ENCODE measurements at regions of chr2 and their contacts with region 1.

Region 1: DNA sequence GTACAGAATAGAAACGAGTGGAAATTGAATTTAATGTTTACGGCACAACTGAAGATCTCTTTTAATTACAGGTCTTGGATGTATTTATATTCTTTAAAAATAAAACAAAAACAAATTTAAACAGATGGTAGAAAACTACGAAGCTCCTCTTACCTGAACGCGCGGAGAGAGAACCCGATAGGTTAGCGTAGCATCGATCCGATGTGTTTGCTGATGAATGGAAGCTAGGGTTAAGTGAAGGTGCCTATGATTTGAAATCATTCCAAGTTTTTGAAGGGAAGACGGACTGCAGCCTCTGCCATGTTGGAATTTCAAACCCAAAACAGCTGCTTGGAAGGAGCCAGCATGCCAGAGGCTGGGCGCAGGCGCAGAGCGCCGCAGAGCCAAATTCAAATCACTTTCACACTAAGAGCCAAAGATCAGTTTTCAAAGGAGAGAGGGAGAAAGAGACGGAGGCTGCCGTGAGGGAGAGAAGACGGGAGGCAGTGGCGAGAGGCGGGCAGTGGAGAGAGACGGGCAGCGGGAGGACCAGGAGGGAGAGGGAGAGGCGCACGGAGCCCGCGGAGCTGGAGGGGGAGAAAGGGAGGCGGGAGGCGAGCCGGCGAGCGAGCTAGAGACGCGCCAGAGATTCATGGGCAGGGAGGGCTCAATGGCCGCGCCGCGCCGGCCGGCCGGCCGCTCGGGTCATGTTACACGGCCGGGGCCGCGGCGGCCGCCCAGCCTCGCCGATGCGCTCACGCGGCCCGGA is at the start of gene FIGN:
- DNase-seq: peak; percentile 83 to 92 (median 85)
- H3K4me3 ChIP-seq: peak within 1 kb of the TSS; percentile 62
- H3K27ac ChIP-seq: peak within 1 kb of the TSS; percentile 88 to 98
- H3K4me1 ChIP-seq: no peaks in the 10 kb centered on the region
- H3K27me3 ChIP-seq: no peaks in the 10 kb centered on the region
- CTCF ChIP-seq: no peak
- EP300 ChIP-seq: no peak
- POLR2A ChIP-seq: peak; percentile 70
- total RNA-seq, gene FIGN: 3.9 to 15.5 (median 10.2) TPM

Region 2: DNA sequence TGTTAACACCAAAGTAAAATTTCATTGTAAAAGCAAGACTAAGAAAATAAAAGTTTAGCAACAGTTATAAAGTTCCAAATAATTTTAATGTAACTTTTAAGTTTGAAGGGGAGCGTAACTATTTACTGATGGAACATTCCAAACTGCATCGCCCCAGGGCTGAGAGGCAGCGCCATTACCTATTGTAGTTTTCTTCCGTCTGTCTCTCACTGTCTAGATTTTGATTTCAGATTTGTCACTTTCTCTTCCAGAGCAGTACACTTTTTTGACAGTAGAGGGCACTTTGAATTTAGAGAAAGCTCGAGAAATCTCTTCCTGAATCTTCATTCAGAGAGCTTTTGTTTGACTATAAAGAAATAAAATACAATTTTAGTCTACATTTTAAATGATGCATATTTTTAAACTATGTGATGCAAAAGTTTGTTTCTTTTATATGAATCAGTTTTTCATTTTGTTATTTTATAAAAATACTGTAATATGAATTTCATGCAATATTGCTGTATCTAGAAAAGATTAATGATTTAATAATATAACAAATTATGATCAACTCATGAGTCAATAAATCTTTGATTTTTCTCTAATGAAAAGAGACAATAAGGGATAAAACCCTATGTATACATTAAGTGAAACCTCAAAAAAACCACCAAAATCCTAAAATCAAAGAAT is 389.8 kb before region 1 on chr2:
- intact Hi-C with region 1: loop called in 1 of 4 experiments (anchors 10 kb)
- DNase-seq: no peak
- H3K4me3 ChIP-seq: no peak overlapping the region
- H3K27ac ChIP-seq: no peak overlapping the region
- H3K4me1 ChIP-seq: peaks cover 4% of the 10 kb centered on the region
- H3K27me3 ChIP-seq: no peaks in the 10 kb centered on the region
- CTCF ChIP-seq: peak; percentile 38 to 56 (median 53)
- EP300 ChIP-seq: no peak
- POLR2A ChIP-seq: no peak